Esophagus muscularis mucosa (tissue), 4 donors: ENCODE measurements at regions of chr6 and their contacts with region 1.

Region 1: GRCh38 chr6:18503593-18504231 is 116.6 kb downstream of the RNF144B start:
- DNase-seq: peak; percentile 92
- H3K4me3 ChIP-seq: peak overlapping the region; percentile 34 to 54 (median 42)
- H3K27ac ChIP-seq: peak overlapping the region in 3 of 4 donors; percentile 23 to 42 (median 34)
- H3K4me1 ChIP-seq: peaks cover 0 to 14% (median 6%) of the 10 kb centered on the region in 4 donors
- H3K27me3 ChIP-seq: no peaks in the 10 kb centered on the region
- CTCF ChIP-seq: peak; percentile 90 to 94 (median 90)
- EP300 ChIP-seq: no peak
- POLR2A ChIP-seq: no peak

Region 2: GRCh38 chr6:18047406-18047805 is 456.3 kb before region 1 on chr6:
- intact Hi-C with region 1: no loop called
- DNase-seq: no peak
- H3K4me3 ChIP-seq: no peak overlapping the region
- H3K27ac ChIP-seq: no peak overlapping the region
- H3K4me1 ChIP-seq: peaks cover 11 to 31% (median 23%) of the 10 kb centered on the region in 4 donors
- H3K27me3 ChIP-seq: no peaks in the 10 kb centered on the region
- CTCF ChIP-seq: no peak
- EP300 ChIP-seq: no peak
- POLR2A ChIP-seq: no peak

Region 3: GRCh38 chr6:18110162-18110561 is 393.6 kb before region 1 on chr6:
- intact Hi-C with region 1: no loop called
- DNase-seq: no peak
- H3K4me3 ChIP-seq: no peak overlapping the region
- H3K27ac ChIP-seq: no peak overlapping the region
- H3K4me1 ChIP-seq: no peaks in the 10 kb centered on the region
- H3K27me3 ChIP-seq: no peaks in the 10 kb centered on the region
- CTCF ChIP-seq: no peak
- EP300 ChIP-seq: no peak
- POLR2A ChIP-seq: no peak

Region 4: DNA sequence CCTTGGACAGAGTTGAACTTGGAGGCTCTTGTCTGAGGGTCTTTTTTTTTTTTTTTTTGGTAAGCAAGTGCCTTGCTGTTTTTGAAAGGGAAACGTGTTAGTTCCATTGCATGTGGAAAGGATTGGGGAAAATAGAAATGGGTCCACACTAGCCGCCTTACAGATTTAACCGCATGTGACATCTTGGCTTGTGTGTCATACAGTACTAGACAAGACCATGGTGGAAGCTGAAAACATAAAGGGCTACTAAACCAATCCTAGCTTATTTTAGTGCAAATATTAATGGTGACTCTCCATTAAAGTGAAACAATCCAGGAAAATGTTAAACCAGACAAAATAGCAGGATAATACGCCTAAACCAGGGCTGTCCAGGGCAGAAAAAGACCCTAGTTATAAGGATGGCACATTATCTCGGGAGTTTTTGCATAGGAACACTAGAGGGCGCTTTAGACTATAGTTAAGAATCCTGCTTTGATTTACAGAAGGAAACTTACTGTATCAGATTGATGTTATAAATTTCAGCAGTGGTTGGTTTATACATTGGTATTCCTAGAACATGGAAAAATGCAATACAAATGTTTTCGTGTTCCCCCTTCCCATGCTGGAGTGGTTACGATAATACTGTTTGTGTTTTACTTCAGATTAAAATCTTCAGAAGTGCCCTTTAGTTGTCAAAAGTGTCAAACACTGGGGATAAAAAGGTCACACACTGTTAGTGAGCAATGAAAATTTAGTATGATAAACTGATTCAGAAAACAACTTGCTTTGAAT is 179.6 kb before region 1 on chr6:
- intact Hi-C with region 1: loop called (anchors 1 kb)
- DNase-seq: no peak
- H3K4me3 ChIP-seq: no peak overlapping the region
- H3K27ac ChIP-seq: no peak overlapping the region
- H3K4me1 ChIP-seq: peaks cover 0 to 15% (median 10%) of the 10 kb centered on the region in 4 donors
- H3K27me3 ChIP-seq: no peaks in the 10 kb centered on the region
- CTCF ChIP-seq: peak; percentile 72 to 74 (median 73)
- EP300 ChIP-seq: no peak
- POLR2A ChIP-seq: no peak